Dendritic cell treated with granulocyte-macrophage colony-stimulating factor and Interleukin-4, amounts not matched to agents 40 ng/mL and 50 ng/mL, for 4 days (primary cell): ENCODE measurements at regions of chr15 and their contacts with region 1.

Region 1: DNA sequence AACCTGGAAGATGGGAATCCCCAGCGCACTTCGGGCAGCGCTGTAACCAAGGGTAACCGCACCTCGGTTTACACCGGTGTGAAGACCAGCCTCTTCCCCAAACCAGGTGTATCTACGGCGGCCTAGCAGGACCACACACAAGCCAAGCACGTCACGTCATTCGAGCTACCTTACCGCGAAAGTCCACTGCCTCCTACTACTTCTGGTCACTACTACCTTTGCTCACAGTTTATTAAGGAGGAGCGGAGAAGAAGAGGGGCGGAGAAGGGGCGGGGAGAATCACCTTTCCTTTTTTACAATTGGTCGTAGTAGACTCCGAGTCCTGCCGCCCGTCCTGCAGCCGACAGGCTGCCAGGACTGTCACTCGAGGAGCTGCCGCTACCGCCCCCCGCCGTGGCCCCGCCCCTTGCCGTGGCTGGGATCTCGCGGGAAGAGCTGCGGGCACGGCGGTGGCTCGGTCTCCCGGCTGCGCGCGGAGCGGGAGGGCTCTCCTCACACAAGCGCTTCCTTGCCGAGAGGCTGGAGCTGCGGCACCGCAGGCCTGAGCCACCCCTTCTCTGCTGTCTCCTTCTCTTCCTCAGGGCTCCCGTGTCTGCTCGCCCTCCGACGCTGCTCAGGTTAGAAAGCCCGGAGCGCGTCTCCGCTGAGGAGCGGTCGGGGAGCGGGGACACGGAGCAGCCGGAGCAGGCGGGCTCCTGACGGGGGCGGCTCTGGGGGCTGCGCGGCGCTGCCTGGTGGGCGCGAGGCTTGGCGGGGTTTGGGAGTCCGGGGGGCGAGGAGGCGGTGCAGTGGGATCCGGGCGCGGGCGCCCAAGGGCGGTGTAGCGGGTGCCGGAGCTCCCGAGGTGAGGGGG is at the start of gene GLCE:
- H3K4me3 Mint-ChIP-seq: peak within 1 kb of the TSS; percentile 93
- H3K27ac Mint-ChIP-seq: peak within 1 kb of the TSS; percentile 86
- H3K4me1 Mint-ChIP-seq: peaks cover 24% of the 10 kb centered on the region
- H3K27me3 Mint-ChIP-seq: peaks cover 7% of the 10 kb centered on the region

Region 2: GRCh38 chr15:69131362-69132220 is 28.8 kb before region 1 on chr15:
- intact Hi-C with region 1: loop called (anchors 2 kb)
- H3K4me3 Mint-ChIP-seq: peak overlapping the region; percentile 65
- H3K27ac Mint-ChIP-seq: peak overlapping the region; percentile 94
- H3K4me1 Mint-ChIP-seq: peaks cover 74% of the 10 kb centered on the region
- H3K27me3 Mint-ChIP-seq: no peaks in the 10 kb centered on the region

Region 3: GRCh38 chr15:69253156-69253555 is 92.8 kb after region 1 on chr15:
- intact Hi-C with region 1: no loop called
- H3K4me3 Mint-ChIP-seq: no peak overlapping the region
- H3K27ac Mint-ChIP-seq: no peak overlapping the region
- H3K4me1 Mint-ChIP-seq: peaks cover 4% of the 10 kb centered on the region
- H3K27me3 Mint-ChIP-seq: no peaks in the 10 kb centered on the region